Right lobe of liver (tissue), 6 donors: ENCODE measurements at regions of chr12 and their contacts with region 1.

Region 1: DNA sequence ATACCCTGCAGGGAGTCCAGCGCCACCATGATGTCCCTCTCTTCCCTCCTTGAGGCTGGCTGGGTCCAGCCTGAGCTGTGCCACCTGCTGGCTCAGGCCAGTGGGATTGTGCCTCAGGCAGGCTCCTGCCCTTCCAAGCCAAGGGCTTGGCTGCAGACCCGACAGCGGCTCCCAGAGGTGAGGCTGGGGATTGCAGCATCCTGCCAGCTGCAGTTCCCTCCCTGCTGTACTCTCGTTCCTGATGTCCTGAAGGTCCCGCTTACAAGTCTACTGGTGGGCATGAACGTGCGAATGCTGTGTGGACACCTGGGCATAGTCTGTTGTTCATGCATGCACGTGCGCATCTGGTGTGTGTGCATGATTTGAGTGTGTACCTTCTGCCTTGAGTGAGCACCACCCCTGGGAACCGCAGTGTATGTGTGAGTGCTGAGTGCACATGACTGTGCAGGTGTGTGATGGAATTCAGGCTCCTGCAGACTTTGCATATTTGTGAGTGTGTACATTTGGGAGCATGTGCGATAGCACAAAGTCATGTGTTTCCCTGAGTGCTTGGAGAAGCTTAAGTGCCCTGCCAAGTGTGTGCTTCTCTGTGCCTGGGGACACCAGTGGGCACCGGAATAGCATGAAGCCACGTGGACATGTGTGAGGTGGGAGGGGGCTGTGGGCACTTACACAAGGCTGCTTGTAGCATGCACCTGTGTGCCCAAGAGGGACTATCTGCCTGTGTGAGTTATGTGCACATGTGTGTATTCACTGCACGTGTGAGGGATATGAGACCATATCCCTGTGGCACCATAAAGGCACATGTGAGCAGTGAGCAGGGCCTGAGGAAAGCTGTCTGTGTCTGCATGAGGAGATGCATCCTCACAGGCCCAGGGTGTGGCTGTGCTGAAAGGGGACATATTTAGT is 19.3 kb upstream of the KRT7 start:
- DNase-seq: peak; percentile 77 to 85 (median 85)
- ATAC-seq: peak; percentile 90 to 99 (median 94)
- H3K4me3 ChIP-seq: no peak overlapping the region
- H3K27ac ChIP-seq: no peak overlapping the region
- H3K4me1 ChIP-seq: no peaks in the 10 kb centered on the region
- H3K27me3 ChIP-seq: no peaks in the 10 kb centered on the region
- CTCF ChIP-seq: peak; percentile 88 to 98 (median 96)
- POLR2A ChIP-seq: no peak

Region 2: GRCh38 chr12:52151859-52152783 is 61.6 kb before region 1 on chr12:
- intact Hi-C with region 1: no loop called
- DNase-seq: peak; percentile 70 to 74 (median 71)
- ATAC-seq: peak; percentile 72 to 78 (median 73)
- H3K4me3 ChIP-seq: peak overlapping the region in 1 of 3 donors; percentile 41
- H3K27ac ChIP-seq: no peak overlapping the region
- H3K4me1 ChIP-seq: no peaks in the 10 kb centered on the region
- H3K27me3 ChIP-seq: no peaks in the 10 kb centered on the region
- CTCF ChIP-seq: peak; percentile 77 to 95 (median 87)
- POLR2A ChIP-seq: no peak

Region 3: GRCh38 chr12:52167954-52168717 is 45.6 kb before region 1 on chr12:
- intact Hi-C with region 1: loop called in 1 of 2 experiments (anchors 5 kb)
- DNase-seq: peak in 1 of 3 donors; percentile 44
- ATAC-seq: peak in 2 of 4 donors; percentile 59 to 81
- H3K4me3 ChIP-seq: no peak overlapping the region
- H3K27ac ChIP-seq: no peak overlapping the region
- H3K4me1 ChIP-seq: no peaks in the 10 kb centered on the region
- H3K27me3 ChIP-seq: no peaks in the 10 kb centered on the region
- CTCF ChIP-seq: no peak
- POLR2A ChIP-seq: no peak